ENCODE measurements at regions of chr3 and their contacts with region 1.

Region 1: DNA sequence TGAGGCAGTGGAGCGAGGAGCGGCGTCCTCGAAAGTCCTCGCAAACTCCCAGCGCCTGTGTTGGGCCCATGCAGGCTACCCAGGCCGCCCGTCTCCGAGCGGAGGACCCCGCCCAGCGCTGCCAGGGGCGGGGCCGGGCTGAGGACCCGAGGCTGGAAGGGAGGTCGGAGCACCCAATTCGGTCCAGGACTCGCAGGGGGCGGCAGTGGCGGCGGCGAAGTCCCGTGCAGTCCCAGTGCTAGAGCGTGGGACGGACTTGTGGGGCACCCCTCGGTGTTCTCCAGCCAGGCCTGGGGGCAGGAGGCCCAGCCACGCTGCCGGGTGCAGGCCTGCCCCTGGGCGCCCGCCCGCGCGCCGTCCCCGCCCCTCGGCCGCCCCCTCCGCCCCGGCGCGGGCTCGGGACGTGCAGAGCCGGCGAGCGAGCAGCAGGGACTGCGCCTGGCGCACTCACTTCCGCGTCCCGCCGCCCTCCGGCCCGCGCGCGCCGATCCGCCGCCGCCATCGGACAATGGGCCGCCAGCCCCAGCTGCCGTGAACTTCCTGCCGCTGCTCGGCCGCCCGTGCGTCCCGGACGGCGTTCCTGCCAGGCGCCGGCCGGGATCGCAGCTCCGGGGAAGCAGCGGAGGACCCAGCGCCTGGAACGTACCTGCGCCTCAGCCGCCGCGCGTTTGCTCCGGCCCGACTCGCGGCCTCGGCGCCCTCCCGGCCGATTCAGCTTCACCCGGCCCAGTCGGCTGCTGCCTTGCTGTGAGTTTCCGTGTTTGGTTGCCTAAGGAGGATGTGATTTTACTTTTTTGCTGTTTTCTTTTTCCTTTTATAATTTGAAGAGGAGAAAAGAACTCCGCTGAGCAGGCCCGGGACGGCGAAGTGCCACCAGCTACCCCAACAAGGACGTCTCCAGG is 592 bp upstream of the LIMD1 start:
- DNase-seq: peak; percentile 74
- H3K4me3 Mint-ChIP-seq: peak overlapping the region; percentile 92
- H3K27ac Mint-ChIP-seq: peak overlapping the region; percentile 84
- H3K4me1 Mint-ChIP-seq: peaks cover 49% of the 10 kb centered on the region
- H3K27me3 Mint-ChIP-seq: peaks cover 6% of the 10 kb centered on the region

Region 2: GRCh38 chr3:45414823-45415222 is 179.1 kb before region 1 on chr3:
- intact Hi-C with region 1: no loop called
- DNase-seq: no peak
- H3K4me3 Mint-ChIP-seq: no peak overlapping the region
- H3K27ac Mint-ChIP-seq: no peak overlapping the region
- H3K4me1 Mint-ChIP-seq: peaks cover 10% of the 10 kb centered on the region
- H3K27me3 Mint-ChIP-seq: no peaks in the 10 kb centered on the region

Region 3: DNA sequence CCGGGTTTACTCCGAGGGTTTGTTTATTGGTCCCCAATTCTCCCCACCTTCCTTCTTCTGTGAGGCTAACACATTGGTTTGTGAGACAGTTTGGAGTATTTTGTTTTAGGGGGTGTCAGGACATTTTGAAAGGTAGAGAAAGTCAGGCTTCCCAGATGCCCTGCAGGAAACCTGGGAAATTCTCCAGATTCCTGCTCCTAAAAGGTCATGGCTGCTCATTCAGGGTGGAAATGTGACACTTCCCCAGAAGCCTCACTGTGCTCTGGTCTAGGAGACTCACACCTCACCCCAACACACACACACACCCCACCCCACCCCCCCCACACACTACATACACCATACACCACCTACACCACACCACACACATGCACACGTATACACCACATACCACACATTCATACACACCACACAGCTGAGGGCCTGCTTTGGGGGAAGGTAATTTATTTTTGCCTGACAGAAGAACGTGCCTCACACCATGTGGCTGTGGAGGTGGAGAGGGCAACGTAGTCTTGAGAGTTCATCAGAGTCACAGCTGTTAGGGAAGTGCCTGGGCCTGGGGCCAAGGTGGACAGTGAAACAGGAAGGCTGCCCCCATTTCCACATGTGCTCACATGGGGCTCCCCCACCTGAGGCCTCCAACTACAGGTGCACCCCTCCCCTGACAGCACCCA is 39.8 kb before region 1 on chr3:
- intact Hi-C with region 1: loop called (anchors 5 kb)
- DNase-seq: no peak
- H3K4me3 Mint-ChIP-seq: no peak overlapping the region
- H3K27ac Mint-ChIP-seq: no peak overlapping the region
- H3K4me1 Mint-ChIP-seq: peaks cover 23% of the 10 kb centered on the region
- H3K27me3 Mint-ChIP-seq: no peaks in the 10 kb centered on the region

Region 4: GRCh38 chr3:45567730-45568172 is 26.2 kb before region 1 on chr3:
- intact Hi-C with region 1: loop called (anchors 1 kb)
- DNase-seq: no peak
- H3K4me3 Mint-ChIP-seq: no peak overlapping the region
- H3K27ac Mint-ChIP-seq: peak overlapping the region; percentile 84
- H3K4me1 Mint-ChIP-seq: peaks cover 58% of the 10 kb centered on the region
- H3K27me3 Mint-ChIP-seq: no peaks in the 10 kb centered on the region

Region 5: GRCh38 chr3:45607790-45608189 is 13.8 kb after region 1 on chr3:
- intact Hi-C with region 1: no loop called
- DNase-seq: no peak
- H3K4me3 Mint-ChIP-seq: no peak overlapping the region
- H3K27ac Mint-ChIP-seq: no peak overlapping the region
- H3K4me1 Mint-ChIP-seq: peaks cover 22% of the 10 kb centered on the region
- H3K27me3 Mint-ChIP-seq: no peaks in the 10 kb centered on the region

Region 6: GRCh38 chr3:45631486-45631885 is 37.5 kb after region 1 on chr3:
- intact Hi-C with region 1: no loop called
- DNase-seq: no peak
- H3K4me3 Mint-ChIP-seq: no peak overlapping the region
- H3K27ac Mint-ChIP-seq: no peak overlapping the region
- H3K4me1 Mint-ChIP-seq: peaks cover 13% of the 10 kb centered on the region
- H3K27me3 Mint-ChIP-seq: no peaks in the 10 kb centered on the region

Measured in activated T-helper 2 cell treated with anti-CD3 and anti-CD28 coated beads, Interferon-gamma antibody, Interleukin-2, Interleukin-4, amounts not matched to agents 10 μg/mL and 5 μg/mL and 100 μg/mL, durations not matched to agents 14 hours and 24 hours and 36 hours (primary cell).